CD4-positive, alpha-beta memory T cell (primary cell): ENCODE measurements at regions of chr13 and their contacts with region 1.

Region 1: DNA sequence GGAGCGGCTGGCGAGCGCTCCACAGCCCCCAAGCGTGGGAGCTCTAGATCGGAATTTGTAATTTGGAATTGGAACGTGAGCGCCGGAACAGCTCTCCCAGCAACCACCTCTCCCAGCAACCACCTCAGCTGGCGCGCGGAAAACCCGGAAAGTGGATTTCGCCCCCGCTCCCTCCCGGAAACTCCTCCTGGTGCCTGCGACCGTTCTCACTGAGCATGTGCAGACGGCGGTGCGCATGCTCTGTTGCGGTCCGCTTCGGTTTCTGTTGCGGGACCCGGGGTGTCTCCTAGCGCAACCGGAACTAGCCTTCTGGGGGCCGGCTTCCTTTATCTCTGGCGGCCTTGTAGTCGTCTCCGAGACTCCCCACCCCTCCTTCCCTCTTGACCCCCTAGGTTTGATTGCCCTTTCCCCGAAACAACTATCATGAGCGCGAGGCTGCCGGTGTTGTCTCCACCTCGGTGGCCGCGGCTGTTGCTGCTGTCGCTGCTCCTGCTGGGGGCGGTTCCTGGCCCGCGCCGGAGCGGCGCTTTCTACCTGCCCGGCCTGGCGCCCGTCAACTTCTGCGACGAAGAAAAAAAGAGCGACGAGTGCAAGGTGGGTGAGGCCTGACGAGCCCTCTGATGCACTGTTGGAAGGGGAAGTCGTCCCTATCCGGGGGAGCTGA is at the start of gene TM9SF2:
- DNase-seq: peak; percentile 96 to 98 (median 97)
- H3K4me3 ChIP-seq: peak within 1 kb of the TSS; percentile 57 to 72
- H3K4me3 Mint-ChIP-seq: peak within 1 kb of the TSS; percentile 89 to 99 (median 98)
- H3K27ac ChIP-seq: peak within 1 kb of the TSS; percentile 86
- H3K27ac Mint-ChIP-seq: peak within 1 kb of the TSS; percentile 98 to 99 (median 98)
- H3K4me1 ChIP-seq: peaks cover 86% of the 10 kb centered on the region
- H3K4me1 Mint-ChIP-seq: peaks cover 49 to 94% (median 71%) of the 10 kb centered on the region in 4 donors
- H3K27me3 ChIP-seq: no peaks in the 10 kb centered on the region
- H3K27me3 Mint-ChIP-seq: no peaks in the 10 kb centered on the region
- total RNA-seq, gene TM9SF2: 60.0 to 64.2 TPM

Region 2: DNA sequence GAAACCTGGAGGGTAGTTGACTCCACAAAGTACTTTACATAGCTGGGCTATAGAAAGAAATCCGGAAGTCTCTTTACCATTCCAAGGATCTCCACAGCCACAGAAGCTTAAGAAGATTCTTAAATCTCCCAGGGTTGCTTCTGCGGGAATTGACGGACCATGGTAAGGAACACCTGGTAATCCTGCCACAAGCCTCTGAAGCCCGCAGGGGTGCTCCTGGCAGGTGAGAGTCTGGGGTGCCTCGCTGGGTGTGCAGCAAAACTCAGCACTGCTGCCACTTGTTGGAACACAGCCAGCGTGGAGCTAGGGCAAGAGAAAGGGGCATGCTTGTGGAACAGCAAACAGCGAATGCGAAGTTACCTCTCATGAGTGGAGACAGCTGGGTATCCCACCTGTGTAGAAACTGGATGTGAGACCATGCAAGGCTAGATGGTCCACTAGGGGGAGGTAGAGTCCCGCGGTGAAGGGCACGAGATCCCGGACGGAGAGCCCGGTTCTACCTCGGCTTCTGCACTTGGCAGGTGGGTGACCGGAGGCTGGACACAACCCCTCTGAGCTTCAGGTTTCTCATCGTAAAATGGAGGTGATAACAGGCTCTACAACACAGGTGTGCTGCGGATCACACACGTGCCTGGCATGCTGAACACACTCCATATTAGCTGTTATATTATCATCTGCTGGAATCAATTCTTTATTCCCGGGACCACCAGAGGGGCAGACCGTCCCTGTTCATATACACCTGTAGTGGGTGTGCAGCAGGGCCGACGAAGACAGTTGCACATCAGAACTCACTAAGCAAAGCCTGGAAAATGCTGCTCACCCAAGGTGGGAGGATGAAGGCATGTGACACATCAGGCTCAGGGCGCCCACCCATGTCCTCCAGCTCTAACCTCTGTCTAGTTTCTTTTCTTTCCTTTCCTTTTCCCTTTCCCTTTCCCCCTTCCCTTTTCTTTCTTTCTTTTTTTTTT is 324.7 kb before region 1 on chr13:
- CTCF ChIA-PET with region 1: interaction called, 3 read pairs
- POLR2A ChIA-PET with region 1: no interaction called
- intact Hi-C with region 1: loop called (anchors 5 kb)
- DNase-seq: peak; percentile 69 to 79 (median 75)
- H3K4me3 ChIP-seq: peak overlapping the region in 1 of 2 donors; percentile 19
- H3K4me3 Mint-ChIP-seq: peak overlapping the region in 7 of 8 donors; percentile 62 to 80 (median 71)
- H3K27ac ChIP-seq: no peak overlapping the region
- H3K27ac Mint-ChIP-seq: peak overlapping the region in 6 of 7 donors; percentile 37 to 81 (median 68)
- H3K4me1 ChIP-seq: peaks cover 44% of the 10 kb centered on the region
- H3K4me1 Mint-ChIP-seq: peaks cover 32 to 43% (median 36%) of the 10 kb centered on the region in 4 donors
- H3K27me3 ChIP-seq: no peaks in the 10 kb centered on the region
- H3K27me3 Mint-ChIP-seq: no peaks in the 10 kb centered on the region

Region 3: GRCh38 chr13:99250982-99251825 is 250.1 kb before region 1 on chr13:
- CTCF ChIA-PET with region 1: no interaction called
- POLR2A ChIA-PET with region 1: no interaction called
- intact Hi-C with region 1: no loop called
- DNase-seq: no peak
- H3K4me3 ChIP-seq: no peak overlapping the region
- H3K4me3 Mint-ChIP-seq: peak overlapping the region in 5 of 8 donors; percentile 9 to 71 (median 36)
- H3K27ac ChIP-seq: no peak overlapping the region
- H3K27ac Mint-ChIP-seq: peak overlapping the region; percentile 63 to 87 (median 77)
- H3K4me1 ChIP-seq: peaks cover 37% of the 10 kb centered on the region
- H3K4me1 Mint-ChIP-seq: peaks cover 41 to 64% (median 50%) of the 10 kb centered on the region in 4 donors
- H3K27me3 ChIP-seq: no peaks in the 10 kb centered on the region
- H3K27me3 Mint-ChIP-seq: no peaks in the 10 kb centered on the region

Region 4: GRCh38 chr13:99442273-99442895 is 58.9 kb before region 1 on chr13:
- CTCF ChIA-PET with region 1: interaction called, 58 read pairs
- POLR2A ChIA-PET with region 1: no interaction called
- intact Hi-C with region 1: loop called (anchors 1 kb)
- DNase-seq: peak; percentile 66 to 74 (median 71)
- H3K4me3 ChIP-seq: no peak overlapping the region
- H3K4me3 Mint-ChIP-seq: no peak overlapping the region
- H3K27ac ChIP-seq: no peak overlapping the region
- H3K27ac Mint-ChIP-seq: peak overlapping the region in 1 of 7 donors; percentile 9
- H3K4me1 ChIP-seq: peaks cover 3% of the 10 kb centered on the region
- H3K4me1 Mint-ChIP-seq: peaks cover 4 to 10% (median 6%) of the 10 kb centered on the region in 4 donors
- H3K27me3 ChIP-seq: no peaks in the 10 kb centered on the region
- H3K27me3 Mint-ChIP-seq: peaks cover 1 to 3% of the 10 kb centered on the region in 2 donors

Region 5: DNA sequence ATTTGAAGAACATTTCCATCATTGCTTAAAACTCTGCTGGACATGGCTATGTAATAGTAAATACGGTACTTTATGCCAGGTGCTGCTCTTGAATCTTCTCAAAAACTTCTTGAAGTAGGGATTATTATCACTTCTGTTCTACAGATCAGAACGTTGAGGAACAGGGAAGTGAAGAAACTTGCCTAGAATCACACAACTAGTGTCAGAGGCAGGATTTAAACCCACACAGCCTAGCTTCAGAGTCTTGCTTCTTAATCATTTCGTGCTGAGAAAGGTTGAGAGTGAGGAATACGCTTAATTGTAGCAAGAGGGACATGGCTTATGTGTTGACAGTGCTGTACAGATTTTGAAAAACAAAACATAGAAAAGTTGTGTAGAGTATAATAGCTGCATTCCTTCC is 13.5 kb after region 1 on chr13:
- CTCF ChIA-PET with region 1: interaction called, 9 read pairs
- POLR2A ChIA-PET with region 1: interaction called, 16 read pairs
- intact Hi-C with region 1: no loop called
- DNase-seq: no peak
- H3K4me3 ChIP-seq: no peak overlapping the region
- H3K4me3 Mint-ChIP-seq: no peak overlapping the region
- H3K27ac ChIP-seq: no peak overlapping the region
- H3K27ac Mint-ChIP-seq: peak overlapping the region in 3 of 7 donors; percentile 57 to 75 (median 68)
- H3K4me1 ChIP-seq: peaks cover 57% of the 10 kb centered on the region
- H3K4me1 Mint-ChIP-seq: peaks cover 50 to 70% (median 61%) of the 10 kb centered on the region in 4 donors
- H3K27me3 ChIP-seq: no peaks in the 10 kb centered on the region
- H3K27me3 Mint-ChIP-seq: no peaks in the 10 kb centered on the region

Region 6: DNA sequence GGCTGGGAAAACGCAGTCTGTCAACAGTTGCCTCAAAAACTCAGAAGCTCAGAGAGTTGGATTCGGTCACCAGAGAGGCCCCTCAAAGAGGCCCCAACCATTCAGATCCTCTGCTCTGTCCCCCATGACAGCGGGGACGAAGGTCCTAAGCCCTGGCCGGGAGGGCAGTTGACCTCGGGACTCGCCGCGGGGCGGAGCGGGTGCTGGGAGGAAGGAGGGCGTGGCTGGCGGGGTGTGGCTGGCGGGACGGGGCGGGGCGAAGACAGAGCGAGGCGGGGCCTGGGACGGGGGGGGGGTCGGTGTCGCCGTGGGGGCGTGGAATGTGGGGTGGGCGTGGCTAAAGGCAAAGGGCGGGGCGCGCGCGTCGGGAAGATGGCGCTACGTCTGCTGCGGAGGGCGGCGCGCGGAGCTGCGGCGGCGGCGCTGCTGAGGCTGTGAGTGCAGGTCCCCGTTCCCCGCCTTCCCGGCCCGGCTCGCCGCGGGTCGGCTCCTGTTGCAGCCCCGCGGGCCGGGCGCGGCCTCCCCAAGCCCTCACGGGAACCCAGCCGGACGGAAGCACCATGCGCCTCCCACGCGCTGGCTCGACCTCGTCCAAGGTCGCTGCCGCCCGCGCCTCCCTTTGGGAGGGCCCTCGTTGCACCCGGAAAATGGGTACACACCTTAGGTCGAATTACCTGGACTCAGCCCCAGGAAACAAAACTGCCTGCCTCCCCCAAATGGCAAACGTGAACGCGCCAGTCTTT is 105.2 kb after region 1 on chr13:
- CTCF ChIA-PET with region 1: interaction called, 4 read pairs
- POLR2A ChIA-PET with region 1: interaction called, 13 read pairs
- intact Hi-C with region 1: loop called (anchors 1 kb)
- DNase-seq: peak; percentile 87 to 90 (median 89)
- H3K4me3 ChIP-seq: peak within 1 kb of the TSS; percentile 53 to 78
- H3K4me3 Mint-ChIP-seq: peak within 1 kb of the TSS; percentile 88 to 97 (median 90)
- H3K27ac ChIP-seq: peak within 1 kb of the TSS; percentile 71
- H3K27ac Mint-ChIP-seq: peak within 1 kb of the TSS; percentile 91 to 96 (median 95)
- H3K4me1 ChIP-seq: peaks cover 35% of the 10 kb centered on the region
- H3K4me1 Mint-ChIP-seq: peaks cover 28 to 59% (median 46%) of the 10 kb centered on the region in 4 donors
- H3K27me3 ChIP-seq: no peaks in the 10 kb centered on the region
- H3K27me3 Mint-ChIP-seq: no peaks in the 10 kb centered on the region

Region 7: GRCh38 chr13:100848304-100848703 is 1347.0 kb after region 1 on chr13:
- CTCF ChIA-PET with region 1: no interaction called
- POLR2A ChIA-PET with region 1: no interaction called
- intact Hi-C with region 1: no loop called
- DNase-seq: no peak
- H3K4me3 ChIP-seq: no peak overlapping the region
- H3K4me3 Mint-ChIP-seq: no peak overlapping the region
- H3K27ac ChIP-seq: no peak overlapping the region
- H3K27ac Mint-ChIP-seq: no peak overlapping the region
- H3K4me1 ChIP-seq: no peaks in the 10 kb centered on the region
- H3K4me1 Mint-ChIP-seq: no peaks in the 10 kb centered on the region
- H3K27me3 ChIP-seq: no peaks in the 10 kb centered on the region
- H3K27me3 Mint-ChIP-seq: peaks cover 2 to 4% of the 10 kb centered on the region in 2 donors